T-cell (primary cell): ENCODE measurements at regions of chr18 and their contacts with region 1.

Region 1: GRCh38 chr18:49944663-49945062 is 131.3 kb upstream of the ACAA2 start:
- DNase-seq: peak in 9 of 35 experiments; percentile 2 to 25 (median 8)
- ATAC-seq: no peak
- H3K4me3 ChIP-seq: no peak overlapping the region
- H3K4me3 Mint-ChIP-seq: no peak overlapping the region
- H3K27ac ChIP-seq: no peak overlapping the region
- H3K27ac Mint-ChIP-seq: no peak overlapping the region
- H3K4me1 ChIP-seq: peaks cover 0 to under 1% of the 10 kb centered on the region in 2 experiments
- H3K4me1 Mint-ChIP-seq: peaks cover 8 to 16% (median 11%) of the 10 kb centered on the region in 3 donors
- H3K27me3 ChIP-seq: peaks cover 0 to 2% of the 10 kb centered on the region in 2 experiments
- H3K27me3 Mint-ChIP-seq: peaks cover 5 to 7% of the 10 kb centered on the region in 2 donors

Region 2: GRCh38 chr18:49997558-49997957 is 52.9 kb after region 1 on chr18:
- CTCF ChIA-PET with region 1: interaction called in 1 of 2 experiments, 12 read pairs
- POLR2A ChIA-PET with region 1: no interaction called
- DNase-seq: no peak
- ATAC-seq: no peak
- H3K4me3 ChIP-seq: no peak overlapping the region
- H3K4me3 Mint-ChIP-seq: no peak overlapping the region
- H3K27ac ChIP-seq: no peak overlapping the region
- H3K27ac Mint-ChIP-seq: no peak overlapping the region
- H3K4me1 ChIP-seq: no peaks in the 10 kb centered on the region
- H3K4me1 Mint-ChIP-seq: no peaks in the 10 kb centered on the region
- H3K27me3 ChIP-seq: peaks cover 2 to 10% of the 10 kb centered on the region in 2 experiments
- H3K27me3 Mint-ChIP-seq: peaks cover 7 to 10% of the 10 kb centered on the region in 2 donors

Region 3: GRCh38 chr18:50009773-50010335 is 65.2 kb after region 1 on chr18:
- CTCF ChIA-PET with region 1: no interaction called
- POLR2A ChIA-PET with region 1: no interaction called
- DNase-seq: peak in 28 of 35 experiments; percentile 2 to 59 (median 14)
- ATAC-seq: peak; percentile 57 to 66 (median 60)
- H3K4me3 ChIP-seq: no peak overlapping the region
- H3K4me3 Mint-ChIP-seq: no peak overlapping the region
- H3K27ac ChIP-seq: no peak overlapping the region
- H3K27ac Mint-ChIP-seq: no peak overlapping the region
- H3K4me1 ChIP-seq: no peaks in the 10 kb centered on the region
- H3K4me1 Mint-ChIP-seq: no peaks in the 10 kb centered on the region
- H3K27me3 ChIP-seq: peaks cover 0 to 7% of the 10 kb centered on the region in 2 experiments
- H3K27me3 Mint-ChIP-seq: no peaks in the 10 kb centered on the region